Tibial artery (tissue), 4 donors: ENCODE measurements at regions of chr10 and their contacts with region 1.

Region 1: DNA sequence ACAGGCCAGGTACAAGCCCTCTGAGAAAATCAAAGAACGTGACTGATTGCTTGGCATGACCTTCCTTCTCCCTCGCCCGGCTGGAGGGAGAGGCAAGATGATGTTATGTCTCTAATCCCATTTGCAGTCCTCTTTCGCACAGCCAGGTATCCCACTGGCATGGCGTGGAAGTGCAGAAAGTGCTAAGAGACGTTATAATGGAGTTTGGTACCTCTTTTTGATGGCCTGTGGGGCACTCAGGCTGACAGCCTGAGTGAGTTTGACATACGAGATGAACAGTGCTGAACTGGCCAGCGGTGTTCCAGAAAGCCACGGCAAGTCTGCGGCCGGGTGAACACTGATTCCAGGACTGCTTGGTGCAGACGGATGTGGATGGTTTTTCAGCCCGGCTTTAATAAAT is 241.6 kb downstream of the RAB11FIP2 start:
- DNase-seq: peak in 1 of 2 donors; percentile 6
- H3K4me3 ChIP-seq: no peak overlapping the region
- H3K27ac ChIP-seq: no peak overlapping the region
- H3K4me1 ChIP-seq: no peaks in the 10 kb centered on the region
- H3K27me3 ChIP-seq: peaks cover 0 to 19% of the 10 kb centered on the region in 2 donors
- CTCF ChIP-seq: no peak

Region 2: DNA sequence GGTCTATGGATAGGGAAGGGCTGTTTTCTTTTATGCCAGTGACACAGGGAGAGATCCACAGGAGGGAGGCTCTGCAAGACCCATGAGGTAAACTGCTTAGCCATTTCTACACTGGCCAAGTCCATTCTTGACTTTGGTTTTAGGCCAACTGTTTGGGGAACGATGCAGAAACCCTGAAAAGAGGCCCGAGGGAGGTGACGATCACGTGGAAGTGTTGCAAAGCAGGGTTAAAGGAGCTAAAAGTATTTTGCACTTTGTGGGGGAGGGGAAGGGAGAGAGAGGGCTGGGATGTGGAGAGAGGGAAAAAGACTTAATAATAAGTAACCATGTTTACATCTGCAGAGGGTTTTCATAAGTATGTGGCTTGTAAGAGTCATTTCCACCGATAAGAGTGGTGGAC is 22.9 kb before region 1 on chr10:
- intact Hi-C with region 1: loop called (anchors 1 kb)
- DNase-seq: no peak
- H3K4me3 ChIP-seq: no peak overlapping the region
- H3K27ac ChIP-seq: no peak overlapping the region
- H3K4me1 ChIP-seq: no peaks in the 10 kb centered on the region
- H3K27me3 ChIP-seq: peaks cover 0 to 7% of the 10 kb centered on the region in 2 donors
- CTCF ChIP-seq: no peak

Region 3: DNA sequence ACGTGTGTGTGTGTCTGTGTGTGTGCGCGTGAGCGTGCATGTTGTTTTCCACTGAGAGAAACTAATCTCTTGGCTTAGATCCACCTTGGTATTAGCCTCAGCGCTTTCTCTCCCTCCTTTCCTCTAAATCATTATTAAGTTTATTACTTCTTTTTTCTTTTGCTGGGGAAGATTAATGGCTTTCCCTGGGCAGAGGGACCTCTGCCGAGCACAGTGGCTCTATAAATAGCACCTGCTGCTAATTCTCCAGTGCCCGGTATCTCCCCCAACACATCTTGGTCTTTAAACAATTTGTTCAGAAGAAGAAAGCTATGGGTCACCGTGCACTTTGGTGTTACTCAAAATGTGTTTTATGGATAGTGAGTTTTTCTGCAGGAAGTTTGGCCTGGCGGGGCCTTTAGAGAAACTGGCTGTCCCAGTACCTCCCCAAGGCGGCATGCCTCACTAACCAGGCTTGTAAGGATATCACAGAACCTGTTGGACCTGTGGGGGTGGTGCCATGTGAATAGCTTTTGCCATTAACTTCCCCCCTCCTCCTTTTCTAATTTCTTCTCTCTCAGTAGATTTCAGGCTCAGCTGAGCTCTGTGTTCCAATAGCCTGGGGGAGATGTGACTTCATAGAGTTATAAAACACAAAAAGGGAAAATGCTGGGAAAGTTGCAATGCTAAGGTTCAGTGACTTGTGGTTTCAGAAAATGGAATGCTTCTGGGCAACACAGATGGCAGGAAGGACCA is 311.7 kb after region 1 on chr10:
- intact Hi-C with region 1: no loop called
- DNase-seq: no peak
- H3K4me3 ChIP-seq: peak overlapping the region in 1 of 2 donors; percentile 12
- H3K27ac ChIP-seq: peak overlapping the region; percentile 22 to 28
- H3K4me1 ChIP-seq: peaks cover 0 to 20% (median 9%) of the 10 kb centered on the region in 4 donors
- H3K27me3 ChIP-seq: no peaks in the 10 kb centered on the region
- CTCF ChIP-seq: no peak